CD4-positive, alpha-beta T cell (primary cell): ENCODE measurements at regions of chr18 and their contacts with region 1.

Region 1: DNA sequence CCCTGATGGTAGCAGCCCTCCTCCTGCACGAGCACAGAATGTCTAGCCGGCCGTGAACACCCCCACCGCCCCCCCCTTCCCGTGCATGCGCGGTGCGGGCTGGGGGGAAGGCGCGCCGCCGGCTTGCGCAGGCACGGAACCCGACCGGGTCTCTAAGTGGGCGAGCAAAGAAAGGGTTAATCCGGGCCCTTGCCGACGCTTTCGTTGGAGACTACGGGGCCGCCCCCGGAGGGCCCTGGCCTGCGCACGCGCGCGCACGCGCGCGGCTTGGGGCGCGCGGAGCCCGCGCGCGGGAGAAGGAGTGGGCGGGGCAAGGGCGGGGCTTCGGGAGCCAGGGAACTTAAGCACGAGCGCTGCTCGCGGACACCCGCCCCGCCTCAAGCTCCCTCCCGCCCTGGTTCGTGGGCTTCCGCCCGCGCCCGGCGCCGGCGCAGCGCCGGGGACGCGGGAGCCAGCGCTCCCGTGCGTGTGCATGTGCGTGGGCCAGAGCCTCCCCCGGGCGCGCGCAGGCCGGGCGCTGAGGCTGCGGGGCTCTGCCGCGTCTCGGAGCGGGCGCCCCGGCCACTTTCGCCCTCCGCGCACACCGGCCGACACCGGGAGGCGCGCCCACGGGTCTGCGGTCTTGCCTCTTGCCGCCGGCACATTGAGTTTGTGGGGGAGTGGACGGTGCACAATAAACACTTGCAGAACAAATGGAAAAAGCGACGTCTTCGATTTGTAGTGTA is 617 bp upstream of the ZBTB14 start:
- DNase-seq: peak; percentile 93 to 98 (median 96)
- ATAC-seq: peak; percentile 60
- H3K4me3 ChIP-seq: peak overlapping the region; percentile 79
- H3K4me3 Mint-ChIP-seq: peak overlapping the region; percentile 97
- H3K27ac ChIP-seq: peak overlapping the region; percentile 87 to 89
- H3K27ac Mint-ChIP-seq: peak overlapping the region; percentile 98
- H3K4me1 ChIP-seq: peaks cover 24% of the 10 kb centered on the region
- H3K4me1 Mint-ChIP-seq: peaks cover 47% of the 10 kb centered on the region
- H3K27me3 ChIP-seq: peaks cover 0 to 3% of the 10 kb centered on the region in 2 experiments
- H3K27me3 Mint-ChIP-seq: no peaks in the 10 kb centered on the region
- CTCF ChIP-seq: no peak

Region 2: DNA sequence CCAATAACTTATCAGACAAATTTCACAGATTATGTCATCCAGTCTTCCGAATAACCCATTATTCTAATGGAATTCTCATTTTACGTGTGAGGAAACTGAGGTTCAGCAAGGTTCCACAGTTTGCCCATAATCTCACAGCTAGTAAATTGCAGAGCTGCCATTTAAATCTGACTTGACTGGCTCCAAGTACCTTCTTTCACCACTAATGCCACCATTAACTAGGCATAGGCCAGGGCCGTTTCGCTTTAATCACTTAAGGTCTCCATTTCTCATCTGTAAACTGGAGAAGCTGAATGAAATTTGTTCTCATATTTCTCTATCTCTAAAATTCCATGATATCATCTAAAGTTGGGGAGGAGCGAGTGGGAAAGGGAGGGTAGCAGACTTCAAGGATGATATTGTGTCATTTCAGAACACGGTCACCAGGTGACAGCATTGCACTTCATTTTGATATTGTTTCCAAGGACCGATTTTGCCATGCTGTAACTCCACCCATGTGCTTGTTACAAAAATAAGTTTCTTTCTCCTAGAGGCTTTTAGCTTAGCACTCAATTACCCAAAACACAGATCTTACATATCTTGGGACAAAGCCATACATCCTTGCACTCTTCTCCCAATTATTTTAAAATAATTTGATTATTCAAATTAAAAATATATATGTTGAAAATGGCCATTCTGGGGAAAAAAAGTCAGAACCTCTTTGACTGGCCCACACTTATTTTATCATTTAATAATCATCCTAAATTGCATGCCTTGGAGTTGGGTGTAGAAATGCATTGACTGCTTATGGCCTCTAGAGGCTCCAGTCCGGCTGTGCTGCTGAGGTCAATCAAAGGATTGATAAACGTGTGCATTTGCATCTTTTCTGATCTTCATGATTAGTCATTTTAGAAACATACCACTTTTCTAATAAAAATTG is 222.9 kb before region 1 on chr18:
- CTCF ChIA-PET with region 1: no interaction called
- POLR2A ChIA-PET with region 1: interaction called, 5 read pairs
- intact Hi-C with region 1: loop called in 1 of 2 experiments (anchors 10 kb)
- DNase-seq: peak in 8 of 14 experiments; percentile 3 to 66 (median 20)
- ATAC-seq: peak; percentile 85
- H3K4me3 ChIP-seq: no peak overlapping the region
- H3K4me3 Mint-ChIP-seq: no peak overlapping the region
- H3K27ac ChIP-seq: no peak overlapping the region
- H3K27ac Mint-ChIP-seq: no peak overlapping the region
- H3K4me1 ChIP-seq: no peaks in the 10 kb centered on the region
- H3K4me1 Mint-ChIP-seq: no peaks in the 10 kb centered on the region
- H3K27me3 ChIP-seq: no peaks in the 10 kb centered on the region
- H3K27me3 Mint-ChIP-seq: peaks cover 4% of the 10 kb centered on the region
- CTCF ChIP-seq: peak; percentile 80

Region 3: GRCh38 chr18:5159080-5159479 is 137.1 kb before region 1 on chr18:
- CTCF ChIA-PET with region 1: no interaction called
- POLR2A ChIA-PET with region 1: interaction called, 79 read pairs
- intact Hi-C with region 1: loop called (anchors 5 to 10 kb)
- DNase-seq: peak in 11 of 14 experiments; percentile 3 to 60 (median 27)
- ATAC-seq: peak; percentile 93
- H3K4me3 ChIP-seq: no peak overlapping the region
- H3K4me3 Mint-ChIP-seq: peak overlapping the region; percentile 72
- H3K27ac ChIP-seq: peak overlapping the region in 1 of 2 donors; percentile 37
- H3K27ac Mint-ChIP-seq: peak overlapping the region; percentile 85
- H3K4me1 ChIP-seq: peaks cover 12% of the 10 kb centered on the region
- H3K4me1 Mint-ChIP-seq: peaks cover 56% of the 10 kb centered on the region
- H3K27me3 ChIP-seq: no peaks in the 10 kb centered on the region
- H3K27me3 Mint-ChIP-seq: no peaks in the 10 kb centered on the region
- CTCF ChIP-seq: no peak

Region 4: GRCh38 chr18:5214583-5215351 is 81.4 kb before region 1 on chr18:
- CTCF ChIA-PET with region 1: no interaction called
- POLR2A ChIA-PET with region 1: interaction called, 11 read pairs
- intact Hi-C with region 1: no loop called
- DNase-seq: peak in 1 of 14 experiments; percentile 21
- ATAC-seq: peak; percentile 46
- H3K4me3 ChIP-seq: no peak overlapping the region
- H3K4me3 Mint-ChIP-seq: no peak overlapping the region
- H3K27ac ChIP-seq: no peak overlapping the region
- H3K27ac Mint-ChIP-seq: no peak overlapping the region
- H3K4me1 ChIP-seq: no peaks in the 10 kb centered on the region
- H3K4me1 Mint-ChIP-seq: peaks cover 22% of the 10 kb centered on the region
- H3K27me3 ChIP-seq: no peaks in the 10 kb centered on the region
- H3K27me3 Mint-ChIP-seq: peaks cover 7% of the 10 kb centered on the region
- CTCF ChIP-seq: no peak

Region 5: DNA sequence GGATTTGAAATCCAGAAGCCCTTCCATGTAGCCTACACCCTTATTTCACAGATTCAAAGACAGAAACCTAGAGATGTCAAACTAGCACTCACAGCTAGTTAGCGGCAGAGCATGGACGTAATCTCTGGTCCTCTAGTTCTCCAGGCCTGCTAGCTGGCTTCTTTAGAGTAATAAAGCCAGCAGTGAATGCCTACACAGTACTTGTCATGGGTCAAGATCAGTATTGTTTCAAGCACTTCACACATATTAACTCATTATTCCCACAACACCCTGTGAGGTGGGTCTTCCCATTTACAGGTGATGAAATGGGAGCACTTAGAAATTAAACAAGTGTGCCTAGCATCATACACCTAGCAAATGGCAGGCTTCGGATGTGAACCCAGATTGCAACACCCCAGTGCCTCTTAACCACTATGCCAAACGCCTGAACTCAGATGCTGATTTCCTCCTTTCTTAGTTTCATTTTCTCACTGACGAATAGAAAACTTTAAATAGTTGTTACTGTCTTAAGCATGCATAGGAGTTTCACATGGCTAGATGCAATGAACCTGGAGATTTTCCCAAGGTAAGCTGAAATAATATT is 13.8 kb after region 1 on chr18:
- CTCF ChIA-PET with region 1: interaction called, 4 read pairs
- POLR2A ChIA-PET with region 1: interaction called, 93 read pairs
- intact Hi-C with region 1: loop called in 1 of 2 experiments (anchors 1 kb)
- DNase-seq: peak in 11 of 14 experiments; percentile 4 to 74 (median 26)
- ATAC-seq: peak; percentile 93
- H3K4me3 ChIP-seq: peak overlapping the region; percentile 52
- H3K4me3 Mint-ChIP-seq: peak overlapping the region; percentile 87
- H3K27ac ChIP-seq: peak overlapping the region; percentile 29 to 68
- H3K27ac Mint-ChIP-seq: peak overlapping the region; percentile 88
- H3K4me1 ChIP-seq: peaks cover 6% of the 10 kb centered on the region
- H3K4me1 Mint-ChIP-seq: peaks cover 28% of the 10 kb centered on the region
- H3K27me3 ChIP-seq: no peaks in the 10 kb centered on the region
- H3K27me3 Mint-ChIP-seq: no peaks in the 10 kb centered on the region
- CTCF ChIP-seq: no peak

Region 6: GRCh38 chr18:5424903-5425664 is 128.9 kb after region 1 on chr18:
- CTCF ChIA-PET with region 1: no interaction called
- POLR2A ChIA-PET with region 1: interaction called, 6 read pairs
- intact Hi-C with region 1: loop called in 1 of 2 experiments (anchors 10 kb)
- DNase-seq: peak in 4 of 14 experiments; percentile 15 to 55 (median 38)
- ATAC-seq: peak; percentile 64
- H3K4me3 ChIP-seq: no peak overlapping the region
- H3K4me3 Mint-ChIP-seq: no peak overlapping the region
- H3K27ac ChIP-seq: no peak overlapping the region
- H3K27ac Mint-ChIP-seq: no peak overlapping the region
- H3K4me1 ChIP-seq: no peaks in the 10 kb centered on the region
- H3K4me1 Mint-ChIP-seq: peaks cover 6% of the 10 kb centered on the region
- H3K27me3 ChIP-seq: no peaks in the 10 kb centered on the region
- H3K27me3 Mint-ChIP-seq: no peaks in the 10 kb centered on the region
- CTCF ChIP-seq: peak; percentile 71